ENCODE measurements at regions of chr3 and their contacts with region 1.

Region 1: GRCh38 chr3:17544632-17545031 is 197.8 kb downstream of the TBC1D5 start:
- DNase-seq: no peak
- ATAC-seq: no peak
- H3K4me3 ChIP-seq: no peak overlapping the region
- H3K4me3 Mint-ChIP-seq: no peak overlapping the region
- H3K27ac ChIP-seq: no peak overlapping the region
- H3K27ac Mint-ChIP-seq: no peak overlapping the region
- H3K4me1 ChIP-seq: no peaks in the 10 kb centered on the region
- H3K4me1 Mint-ChIP-seq: no peaks in the 10 kb centered on the region
- H3K27me3 ChIP-seq: no peaks in the 10 kb centered on the region
- H3K27me3 Mint-ChIP-seq: no peaks in the 10 kb centered on the region

Region 2: DNA sequence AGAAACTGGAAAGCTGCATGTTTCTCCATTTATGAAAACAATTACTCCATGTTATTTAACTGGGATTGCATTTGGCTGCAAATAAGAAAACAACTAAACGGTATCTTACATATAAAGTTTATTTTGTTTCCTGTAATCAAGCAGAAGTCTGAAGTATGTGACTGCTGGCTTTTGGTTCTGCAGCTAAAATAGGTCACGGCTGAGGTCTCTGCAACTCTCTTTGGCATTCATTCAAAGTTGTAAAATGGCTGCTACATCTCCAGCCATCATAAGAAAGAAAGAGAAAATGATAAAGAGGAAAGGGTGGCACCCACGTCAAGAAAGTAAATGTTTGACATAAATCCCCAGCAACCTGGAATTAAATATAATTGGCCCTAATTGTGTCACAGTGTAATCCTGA is 208.3 kb before region 1 on chr3:
- CTCF ChIA-PET with region 1: no interaction called
- POLR2A ChIA-PET with region 1: interaction called in 1 of 2 experiments, 15 read pairs
- DNase-seq: no peak
- ATAC-seq: no peak
- H3K4me3 ChIP-seq: no peak overlapping the region
- H3K4me3 Mint-ChIP-seq: no peak overlapping the region
- H3K27ac ChIP-seq: no peak overlapping the region
- H3K27ac Mint-ChIP-seq: peak overlapping the region in 1 of 2 donors; percentile 77
- H3K4me1 ChIP-seq: no peaks in the 10 kb centered on the region
- H3K4me1 Mint-ChIP-seq: peaks cover 0 to 3% (median 0%) of the 10 kb centered on the region in 3 donors
- H3K27me3 ChIP-seq: no peaks in the 10 kb centered on the region
- H3K27me3 Mint-ChIP-seq: no peaks in the 10 kb centered on the region

Region 3: GRCh38 chr3:18618723-18619122 is 1074.1 kb after region 1 on chr3:
- CTCF ChIA-PET with region 1: no interaction called
- POLR2A ChIA-PET with region 1: no interaction called
- DNase-seq: no peak
- ATAC-seq: no peak
- H3K4me3 ChIP-seq: no peak overlapping the region
- H3K4me3 Mint-ChIP-seq: no peak overlapping the region
- H3K27ac ChIP-seq: no peak overlapping the region
- H3K27ac Mint-ChIP-seq: no peak overlapping the region
- H3K4me1 ChIP-seq: no peaks in the 10 kb centered on the region
- H3K4me1 Mint-ChIP-seq: peaks cover 0 to 6% (median 0%) of the 10 kb centered on the region in 3 donors
- H3K27me3 ChIP-seq: no peaks in the 10 kb centered on the region
- H3K27me3 Mint-ChIP-seq: no peaks in the 10 kb centered on the region